ENCODE measurements at regions of chr15 and their contacts with region 1.

Region 1: GRCh38 chr15:51162865-51163762 is 68.4 kb upstream of the TNFAIP8L3 start:
- DNase-seq: peak; percentile 87

Region 2: DNA sequence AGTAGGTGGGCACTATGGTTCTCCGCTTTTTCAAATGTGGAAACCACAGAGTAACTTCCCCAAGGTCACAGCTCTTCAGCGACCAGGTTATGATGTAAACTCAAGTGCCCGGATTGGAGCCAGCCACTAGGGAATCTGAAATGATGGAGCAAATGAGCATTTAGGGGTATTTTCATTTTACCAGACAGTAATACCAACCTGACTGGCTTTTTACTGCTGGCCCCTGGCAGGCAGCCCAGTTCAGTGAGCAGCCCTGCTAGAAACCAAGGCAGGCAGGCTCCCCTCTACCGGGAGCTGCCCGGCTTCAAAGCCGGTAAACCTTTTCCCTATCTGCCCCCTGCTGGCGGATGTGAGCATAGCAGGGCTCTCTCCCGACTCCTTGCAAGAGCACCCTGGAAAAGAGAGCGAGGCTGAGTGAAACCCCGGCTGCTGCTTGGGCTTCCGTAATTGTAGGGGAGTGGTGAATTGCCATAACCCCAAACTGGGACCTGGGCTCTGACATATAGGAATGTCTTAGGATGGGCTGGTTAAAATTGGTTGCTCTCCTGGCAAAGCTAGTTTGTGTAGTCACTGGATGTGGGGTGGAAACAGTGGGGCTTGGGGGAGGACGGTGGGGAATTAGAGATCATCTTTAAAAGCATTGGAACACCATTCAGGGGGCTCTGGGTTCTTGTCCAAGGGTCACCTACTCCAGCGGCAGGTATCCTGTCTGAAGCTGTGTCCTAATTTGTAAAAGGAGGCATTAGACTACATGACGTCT is 29.6 kb after region 1 on chr15:
- intact Hi-C with region 1: loop called in 1 of 2 experiments (anchors 2 kb)
- DNase-seq: peak; percentile 96

Region 3: GRCh38 chr15:51398626-51399025 is 235.5 kb after region 1 on chr15:
- intact Hi-C with region 1: loop called in 1 of 2 experiments (anchors 5 kb)
- DNase-seq: no peak